Mammary epithelial cell (primary cell): ENCODE measurements at regions of chr2 and their contacts with region 1.

Region 1: DNA sequence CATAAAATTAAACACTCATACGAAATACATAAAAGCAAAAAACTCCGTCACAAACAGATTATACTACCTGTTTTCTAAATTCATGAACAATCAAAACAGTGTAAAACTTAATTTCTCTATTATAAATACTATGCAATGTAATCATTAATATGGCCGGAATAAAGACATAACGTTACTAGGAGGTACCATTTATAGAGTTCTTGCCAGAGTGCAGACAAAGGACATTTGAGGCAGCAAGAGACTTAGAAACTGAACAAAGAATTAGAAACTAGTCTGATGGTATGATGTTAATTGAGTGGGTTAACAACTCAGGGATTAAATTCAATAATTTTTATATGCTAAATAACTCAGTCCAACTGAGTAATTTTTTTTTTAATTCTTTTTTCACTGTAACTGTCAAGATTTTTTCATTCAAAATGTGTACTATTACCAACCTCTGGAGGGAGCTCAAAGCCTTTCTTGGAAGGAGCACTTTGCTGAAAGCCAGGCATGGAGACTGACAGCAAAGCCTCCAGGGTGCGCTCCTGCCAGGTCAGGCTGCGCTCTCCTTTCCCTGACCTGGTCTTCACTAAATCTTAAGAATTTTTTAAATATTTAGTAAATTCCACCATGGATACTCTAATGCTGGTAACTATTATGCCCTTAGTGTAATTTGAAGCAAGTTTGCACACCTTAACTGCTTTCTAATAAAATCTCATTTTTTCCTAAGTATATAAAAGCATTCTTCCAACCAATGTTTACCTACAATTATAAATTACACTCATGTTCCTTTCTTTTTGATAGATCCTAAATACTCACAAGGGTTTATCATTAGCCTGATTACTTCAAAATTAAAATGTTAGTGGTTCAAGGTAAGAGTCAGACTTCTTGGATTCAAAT is 34.1 kb downstream of the WDR35 start:
- DNase-seq: peak; percentile 49
- H3K4me3 ChIP-seq: no peak overlapping the region
- H3K27ac ChIP-seq: no peak overlapping the region
- H3K4me1 ChIP-seq: no peaks in the 10 kb centered on the region
- H3K27me3 ChIP-seq: no peaks in the 10 kb centered on the region
- CTCF ChIP-seq: peak; percentile 85 to 87

Region 2: GRCh38 chr2:18387441-18388206 is 1568.2 kb before region 1 on chr2:
- CTCF ChIA-PET with region 1: no interaction called
- dilution Hi-C with region 1: no loop called
- in situ Hi-C with region 1: no loop called
- intact Hi-C with region 1: loop called (anchors 5 kb)
- DNase-seq: peak; percentile 51
- H3K4me3 ChIP-seq: no peak overlapping the region
- H3K27ac ChIP-seq: no peak overlapping the region
- H3K4me1 ChIP-seq: no peaks in the 10 kb centered on the region
- H3K27me3 ChIP-seq: no peaks in the 10 kb centered on the region
- CTCF ChIP-seq: peak; percentile 93 to 95

Region 3: GRCh38 chr2:20015472-20016083 is 59.8 kb after region 1 on chr2:
- CTCF ChIA-PET with region 1: interaction called, 9 read pairs
- dilution Hi-C with region 1: no loop called
- in situ Hi-C with region 1: no loop called
- intact Hi-C with region 1: loop called (anchors 1 kb)
- DNase-seq: peak; percentile 43
- H3K4me3 ChIP-seq: no peak overlapping the region
- H3K27ac ChIP-seq: no peak overlapping the region
- H3K4me1 ChIP-seq: peaks cover 13% of the 10 kb centered on the region
- H3K27me3 ChIP-seq: no peaks in the 10 kb centered on the region
- CTCF ChIP-seq: peak; percentile 37 to 57

Region 4: DNA sequence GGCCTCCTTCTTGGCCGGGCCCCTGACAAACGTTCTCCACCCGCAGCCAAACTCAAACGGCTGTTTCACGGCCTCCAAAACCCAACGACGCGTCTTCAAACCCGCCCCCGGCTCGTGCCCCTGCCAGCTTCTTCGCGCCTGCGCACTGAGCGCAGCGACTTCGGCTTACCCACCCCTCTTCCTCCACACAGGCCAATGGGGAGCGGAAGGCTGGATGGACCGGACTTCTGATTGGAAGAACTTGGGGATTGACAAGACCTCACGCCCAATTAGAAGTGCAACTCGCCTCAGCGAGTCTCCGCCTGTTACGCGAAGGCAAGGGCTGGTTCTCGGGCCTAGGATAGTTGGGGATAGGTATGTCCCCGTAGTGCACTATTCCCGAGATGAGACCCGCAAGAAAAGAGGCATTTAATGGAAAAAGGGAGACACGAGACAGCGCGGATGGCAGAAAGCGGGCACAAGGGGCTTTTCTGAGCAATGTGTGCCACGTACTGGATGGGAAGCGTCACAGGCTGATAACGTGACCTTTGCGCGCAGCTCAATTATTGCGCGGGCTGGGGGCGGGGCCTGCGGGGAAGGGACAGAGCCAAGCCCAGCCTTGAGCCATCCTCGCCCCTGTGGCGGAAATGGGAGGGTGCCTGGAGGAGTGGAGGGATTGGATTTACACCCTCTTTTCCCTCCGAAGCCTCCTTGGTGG is 95.9 kb after region 1 on chr2 and contains the start of gene LAPTM4A:
- CTCF ChIA-PET with region 1: no interaction called
- dilution Hi-C with region 1: no loop called
- in situ Hi-C with region 1: no loop called
- intact Hi-C with region 1: loop called (anchors 5 kb)
- DNase-seq: peak; percentile 100
- H3K4me3 ChIP-seq: peak within 1 kb of the TSS; percentile 75 to 97 (median 87)
- H3K27ac ChIP-seq: peak within 1 kb of the TSS; percentile 93
- H3K4me1 ChIP-seq: peaks cover 22% of the 10 kb centered on the region
- H3K27me3 ChIP-seq: no peaks in the 10 kb centered on the region
- CTCF ChIP-seq: peak in 1 of 2 donors; percentile 3
- total RNA-seq, gene LAPTM4A: 160 to 162 TPM

Region 5: DNA sequence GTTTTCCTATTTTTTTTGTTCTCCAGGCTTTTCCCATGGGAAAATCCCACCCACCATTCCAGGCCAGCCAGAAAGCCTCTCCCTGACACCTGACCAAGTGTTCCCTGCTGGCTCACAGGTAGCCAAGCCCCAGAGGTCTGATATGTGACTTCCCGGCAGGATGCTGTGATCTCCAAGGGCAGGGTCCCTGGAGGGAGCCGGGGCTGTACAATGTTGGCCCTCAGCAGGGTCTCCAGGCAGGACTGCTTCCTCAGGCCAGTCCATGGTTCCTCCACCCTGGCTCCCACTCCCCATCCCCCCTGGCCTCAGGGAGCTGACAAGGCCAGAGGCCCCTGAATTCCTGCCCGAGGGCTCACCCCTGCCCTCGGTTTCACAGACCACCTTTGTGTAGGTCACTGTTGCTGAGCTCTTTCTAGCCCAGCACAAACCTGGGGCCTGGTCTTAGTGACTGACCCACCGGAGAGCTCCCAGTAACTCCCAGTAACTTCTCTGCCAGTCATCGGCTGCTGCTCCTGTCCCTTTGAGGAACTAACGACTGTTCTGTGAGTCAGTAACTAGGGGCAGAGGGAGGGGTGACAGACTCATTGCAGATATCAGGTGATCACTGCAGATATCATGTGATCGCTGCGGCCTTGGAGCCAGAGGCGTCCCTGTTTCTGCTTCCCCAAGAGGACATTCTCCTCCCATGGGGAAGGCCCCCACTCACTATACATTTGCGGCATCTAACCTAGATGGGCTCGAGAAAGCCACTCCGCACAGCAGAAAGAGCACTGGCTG is 230.5 kb after region 1 on chr2:
- CTCF ChIA-PET with region 1: no interaction called
- dilution Hi-C with region 1: no loop called
- in situ Hi-C with region 1: no loop called
- intact Hi-C with region 1: loop called (anchors 1 kb)
- DNase-seq: no peak
- H3K4me3 ChIP-seq: no peak overlapping the region
- H3K27ac ChIP-seq: no peak overlapping the region
- H3K4me1 ChIP-seq: peaks cover 42% of the 10 kb centered on the region
- H3K27me3 ChIP-seq: no peaks in the 10 kb centered on the region
- CTCF ChIP-seq: no peak

Region 6: GRCh38 chr2:20212459-20212870 is 256.7 kb after region 1 on chr2:
- CTCF ChIA-PET with region 1: no interaction called
- dilution Hi-C with region 1: no loop called
- in situ Hi-C with region 1: no loop called
- intact Hi-C with region 1: loop called (anchors 5 kb)
- DNase-seq: peak; percentile 96
- H3K4me3 ChIP-seq: peak overlapping the region in 2 of 3 experiments; percentile 13 to 19
- H3K27ac ChIP-seq: peak overlapping the region; percentile 90
- H3K4me1 ChIP-seq: peaks cover 100% of the 10 kb centered on the region
- H3K27me3 ChIP-seq: no peaks in the 10 kb centered on the region
- CTCF ChIP-seq: no peak

Region 7: GRCh38 chr2:20291106-20291564 is 335.4 kb after region 1 on chr2:
- CTCF ChIA-PET with region 1: no interaction called
- dilution Hi-C with region 1: no loop called
- in situ Hi-C with region 1: no loop called
- intact Hi-C with region 1: loop called (anchors 1 kb)
- DNase-seq: peak; percentile 80
- H3K4me3 ChIP-seq: no peak overlapping the region
- H3K27ac ChIP-seq: peak overlapping the region; percentile 27
- H3K4me1 ChIP-seq: peaks cover 19% of the 10 kb centered on the region
- H3K27me3 ChIP-seq: no peaks in the 10 kb centered on the region
- CTCF ChIP-seq: peak; percentile 79 to 82